ENCODE measurements at regions of chr15 and their contacts with region 1.

Region 1: GRCh38 chr15:62109982-62110851 is 43.4 kb downstream of the C2CD4A start:
- DNase-seq: peak; percentile 80
- ATAC-seq: peak; percentile 70
- H3K4me3 ChIP-seq: no peak overlapping the region
- H3K27ac ChIP-seq: peak overlapping the region; percentile 77
- H3K4me1 ChIP-seq: peaks cover 44% of the 10 kb centered on the region
- H3K27me3 ChIP-seq: no peaks in the 10 kb centered on the region
- CTCF ChIP-seq: no peak

Region 2: DNA sequence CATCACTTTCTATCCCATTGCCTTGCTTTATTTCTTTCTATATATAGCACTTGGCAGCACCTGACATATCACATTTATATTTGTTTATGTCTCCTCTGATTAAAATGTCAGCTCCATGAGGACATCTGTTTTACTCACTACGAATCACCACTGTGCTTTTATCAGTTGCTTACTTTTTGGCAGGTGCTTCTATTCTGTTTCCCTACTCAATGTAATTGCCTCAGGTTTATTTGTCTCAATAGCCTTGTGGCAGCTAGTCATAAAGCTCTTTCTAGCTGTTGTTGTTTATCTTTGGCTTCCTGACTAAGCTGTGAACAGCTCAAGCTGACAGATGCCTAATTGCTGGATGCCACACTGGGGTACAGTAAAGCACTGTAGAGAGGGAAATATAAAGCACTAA is 135.5 kb before region 1 on chr15:
- CTCF ChIA-PET with region 1: no interaction called
- POLR2A ChIA-PET with region 1: no interaction called
- intact Hi-C with region 1: no loop called
- DNase-seq: peak; percentile 48
- ATAC-seq: peak; percentile 86
- H3K4me3 ChIP-seq: no peak overlapping the region
- H3K27ac ChIP-seq: no peak overlapping the region
- H3K4me1 ChIP-seq: peaks cover 6% of the 10 kb centered on the region; the same call in 1 of the 2 replicates
- H3K27me3 ChIP-seq: no peaks in the 10 kb centered on the region
- CTCF ChIP-seq: no peak

Region 3: DNA sequence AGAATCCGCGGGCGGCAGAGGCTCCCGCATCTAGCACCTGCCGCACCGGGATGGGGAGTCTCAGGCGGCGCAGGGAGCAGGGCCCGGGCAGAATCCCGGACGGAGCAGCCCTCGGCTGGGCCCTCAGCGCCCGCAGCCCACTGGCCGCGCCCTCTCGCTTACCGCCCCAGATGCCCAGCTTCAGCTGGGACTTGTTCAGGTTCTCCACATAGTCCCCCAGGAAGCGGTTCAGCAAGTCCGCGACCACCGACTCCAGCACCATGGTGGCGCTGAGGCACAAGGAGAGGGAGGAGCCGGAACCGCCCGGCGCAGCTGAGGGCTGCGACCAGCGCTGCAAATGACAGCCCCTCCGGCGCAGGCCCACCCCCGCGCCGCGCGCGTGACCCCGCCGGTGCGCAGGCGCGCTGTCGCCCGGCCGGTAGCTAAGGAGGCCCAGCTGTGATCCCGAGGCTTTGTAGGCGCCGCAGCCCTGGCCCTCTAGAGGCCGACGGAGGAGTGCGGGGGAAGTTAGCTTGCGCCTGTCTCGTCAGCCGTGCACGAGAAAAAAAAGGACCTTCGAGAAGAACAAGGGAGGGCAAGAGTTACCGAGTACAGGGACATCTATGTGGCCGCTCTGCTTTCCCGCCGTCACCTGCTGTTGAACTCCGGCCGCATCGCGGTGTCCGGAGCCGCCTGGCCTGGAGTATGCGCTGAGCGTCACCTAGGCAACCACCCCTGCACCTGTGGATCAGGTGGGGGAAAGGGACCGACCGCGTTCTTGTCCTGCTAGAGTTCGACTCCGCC is 49.9 kb before region 1 on chr15 and contains the start of gene VPS13C:
- CTCF ChIA-PET with region 1: no interaction called
- POLR2A ChIA-PET with region 1: no interaction called
- intact Hi-C with region 1: loop called (anchors 5 kb)
- DNase-seq: peak; percentile 89
- ATAC-seq: peak; percentile 91
- H3K4me3 ChIP-seq: peak within 1 kb of the TSS; percentile 94
- H3K27ac ChIP-seq: peak within 1 kb of the TSS; percentile 11; the same call in 1 of the 2 replicates
- H3K4me1 ChIP-seq: peaks cover 13% of the 10 kb centered on the region
- H3K27me3 ChIP-seq: no peaks in the 10 kb centered on the region
- CTCF ChIP-seq: peak; percentile 66
- total RNA-seq, gene VPS13C: 11.3 and 11.4 TPM in 2 replicates

Region 4: GRCh38 chr15:62087671-62088352 is 22.4 kb before region 1 on chr15:
- CTCF ChIA-PET with region 1: no interaction called
- POLR2A ChIA-PET with region 1: no interaction called
- intact Hi-C with region 1: loop called (anchors 1 kb)
- DNase-seq: peak; percentile 49
- ATAC-seq: peak; percentile 54
- H3K4me3 ChIP-seq: no peak overlapping the region
- H3K27ac ChIP-seq: peak overlapping the region; percentile 41
- H3K4me1 ChIP-seq: peaks cover 11% of the 10 kb centered on the region
- H3K27me3 ChIP-seq: no peaks in the 10 kb centered on the region
- CTCF ChIP-seq: no peak

Region 5: GRCh38 chr15:62124176-62124972 is 14.2 kb after region 1 on chr15:
- CTCF ChIA-PET with region 1: interaction called, 5 read pairs
- POLR2A ChIA-PET with region 1: no interaction called
- intact Hi-C with region 1: loop called (anchors 1 kb)
- DNase-seq: peak; percentile 63
- ATAC-seq: peak; percentile 80
- H3K4me3 ChIP-seq: peak overlapping the region; percentile 41; the same call in 1 of the 2 replicates
- H3K27ac ChIP-seq: peak overlapping the region; percentile 90
- H3K4me1 ChIP-seq: peaks cover 28% of the 10 kb centered on the region
- H3K27me3 ChIP-seq: no peaks in the 10 kb centered on the region
- CTCF ChIP-seq: no peak

Region 6: DNA sequence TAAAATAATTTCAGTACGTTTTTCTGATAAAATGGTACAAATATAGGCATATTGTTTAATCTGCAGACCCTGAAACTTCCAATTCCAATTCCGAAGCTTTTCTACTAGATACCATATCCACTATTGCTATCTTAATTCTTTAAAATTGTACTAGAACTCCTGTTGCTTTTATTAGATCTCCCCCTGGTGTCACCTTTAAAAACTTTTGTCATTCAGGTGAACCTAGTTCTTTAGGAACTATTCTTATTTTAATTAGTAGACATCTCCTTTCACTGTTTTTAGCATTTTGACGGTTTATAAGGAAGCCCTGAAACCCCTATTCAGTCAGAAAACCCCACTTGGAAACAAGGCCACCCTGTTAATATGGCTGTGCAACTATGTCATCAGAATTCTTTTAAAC is 32.5 kb after region 1 on chr15:
- CTCF ChIA-PET with region 1: interaction called, 15 read pairs
- POLR2A ChIA-PET with region 1: no interaction called
- intact Hi-C with region 1: loop called (anchors 2 kb)
- DNase-seq: peak; percentile 38
- ATAC-seq: no peak
- H3K4me3 ChIP-seq: no peak overlapping the region
- H3K27ac ChIP-seq: no peak overlapping the region
- H3K4me1 ChIP-seq: peaks cover 20% of the 10 kb centered on the region
- H3K27me3 ChIP-seq: no peaks in the 10 kb centered on the region
- CTCF ChIP-seq: peak; percentile 68